CD8-positive, alpha-beta T cell (primary cell): ENCODE measurements at regions of chr21 and their contacts with region 1.

Region 1: DNA sequence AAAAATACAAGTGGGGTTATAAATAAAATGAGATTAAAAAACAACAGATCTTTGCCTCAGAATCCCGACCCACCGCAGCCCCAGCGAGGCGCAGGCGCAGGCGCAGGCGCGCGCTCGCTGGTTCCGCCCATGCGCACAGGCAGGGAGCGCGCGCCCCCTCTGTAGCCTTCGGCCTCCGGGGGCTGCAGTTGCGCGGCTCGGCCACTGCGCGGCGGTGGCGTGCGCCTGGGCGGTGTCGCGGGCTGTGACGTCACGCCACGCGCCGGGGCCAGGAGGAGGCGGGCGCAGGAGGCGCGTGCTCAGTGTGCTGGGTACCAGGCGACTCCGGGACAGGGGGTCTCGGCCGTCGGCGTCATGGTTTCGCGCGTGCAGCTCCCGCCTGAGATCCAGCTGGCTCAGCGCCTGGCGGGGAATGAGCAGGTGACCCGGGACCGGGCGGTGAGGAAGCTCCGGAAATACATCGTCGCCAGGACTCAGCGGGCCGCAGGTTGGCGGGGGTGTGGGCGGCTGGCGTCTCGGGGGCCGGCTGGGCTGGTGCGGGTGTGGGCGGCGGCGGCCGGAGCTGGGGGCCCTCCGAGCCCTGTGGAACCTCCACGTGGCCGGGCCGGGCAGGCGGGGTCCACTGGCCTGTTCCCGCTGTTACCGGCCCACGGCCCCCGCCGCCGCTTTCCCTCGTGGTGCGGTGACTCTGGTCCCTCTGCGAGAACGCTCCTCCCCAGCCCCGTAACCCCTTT is at the start of gene RRP1:
- DNase-seq: peak; percentile 89 to 99 (median 95)
- ATAC-seq: peak; percentile 98
- H3K4me3 ChIP-seq: peak within 1 kb of the TSS; percentile 82 to 94
- H3K4me3 Mint-ChIP-seq: peak within 1 kb of the TSS; percentile 91
- H3K27ac ChIP-seq: peak within 1 kb of the TSS; percentile 71 to 78
- H3K27ac Mint-ChIP-seq: peak within 1 kb of the TSS; percentile 87
- H3K4me1 ChIP-seq: peaks cover 16% of the 10 kb centered on the region
- H3K4me1 Mint-ChIP-seq: peaks cover 21% of the 10 kb centered on the region
- H3K27me3 ChIP-seq: no peaks in the 10 kb centered on the region
- H3K27me3 Mint-ChIP-seq: no peaks in the 10 kb centered on the region
- CTCF ChIP-seq: peak; percentile 97
- total RNA-seq, gene RRP1: 26.8 to 26.9 TPM

Region 2: GRCh38 chr21:42973991-42974831 is 815.2 kb before region 1 on chr21 and contains the start of gene PKNOX1:
- CTCF ChIA-PET with region 1: no interaction called
- POLR2A ChIA-PET with region 1: no interaction called
- intact Hi-C with region 1: loop called (anchors 5 kb)
- DNase-seq: peak; percentile 98 to 100 (median 99)
- ATAC-seq: peak; percentile 85
- H3K4me3 ChIP-seq: peak within 1 kb of the TSS; percentile 83 to 87
- H3K4me3 Mint-ChIP-seq: peak within 1 kb of the TSS; percentile 91
- H3K27ac ChIP-seq: peak within 1 kb of the TSS; percentile 81 to 98
- H3K27ac Mint-ChIP-seq: peak within 1 kb of the TSS; percentile 94
- H3K4me1 ChIP-seq: peaks cover 18% of the 10 kb centered on the region
- H3K4me1 Mint-ChIP-seq: peaks cover 22% of the 10 kb centered on the region
- H3K27me3 ChIP-seq: no peaks in the 10 kb centered on the region
- H3K27me3 Mint-ChIP-seq: no peaks in the 10 kb centered on the region
- CTCF ChIP-seq: no peak
- total RNA-seq, gene PKNOX1: 10.3 to 11.1 TPM

Region 3: DNA sequence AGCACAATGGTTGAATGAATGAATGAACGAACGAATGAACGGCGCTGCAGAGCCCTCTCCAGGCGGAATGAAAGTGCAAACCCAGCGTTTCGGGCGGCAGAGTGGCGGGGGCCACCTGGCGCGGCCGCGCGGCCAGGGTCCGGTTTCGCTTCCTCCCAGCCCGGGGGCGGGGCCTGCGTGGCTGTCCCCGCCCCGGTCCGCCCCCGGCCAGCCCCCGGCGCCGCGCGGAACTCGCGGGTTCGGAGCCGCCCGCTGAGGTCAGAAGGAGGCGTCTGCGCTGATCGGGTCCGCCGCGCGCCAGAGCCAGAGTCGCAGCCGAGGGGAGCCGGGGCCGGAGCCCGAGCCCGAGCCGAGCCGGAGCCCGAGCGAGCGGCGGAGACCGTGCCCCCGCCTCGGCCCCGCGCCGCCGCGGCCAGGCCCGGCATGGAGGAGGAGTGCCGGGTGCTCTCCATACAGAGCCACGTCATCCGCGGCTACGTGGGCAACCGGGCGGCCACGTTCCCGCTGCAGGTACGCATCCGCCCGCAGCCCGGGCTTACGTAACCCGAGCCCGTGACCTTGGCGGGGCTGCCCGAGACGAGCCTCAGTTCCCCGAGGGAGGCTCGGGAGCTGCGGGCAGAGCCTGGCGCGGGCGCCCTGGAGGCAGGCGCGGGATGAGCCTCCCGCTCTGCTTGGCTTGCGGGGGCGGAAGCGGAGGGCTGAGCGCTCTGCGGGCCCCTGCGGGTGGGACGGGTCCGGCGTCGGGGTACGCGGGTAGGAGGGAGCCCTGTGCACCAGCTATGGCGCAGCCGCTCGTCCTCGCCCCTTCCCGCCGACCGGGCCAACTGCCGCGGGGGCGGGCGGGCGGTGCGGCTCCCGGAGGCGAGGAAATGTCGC is 70.3 kb before region 1 on chr21 and contains the start of gene PDXK:
- CTCF ChIA-PET with region 1: no interaction called
- POLR2A ChIA-PET with region 1: no interaction called
- intact Hi-C with region 1: loop called in 1 of 2 experiments (anchors 2 kb)
- DNase-seq: peak; percentile 49 to 91 (median 75)
- ATAC-seq: peak; percentile 77
- H3K4me3 ChIP-seq: peak within 1 kb of the TSS; percentile 70 to 83
- H3K4me3 Mint-ChIP-seq: peak within 1 kb of the TSS; percentile 84
- H3K27ac ChIP-seq: peak within 1 kb of the TSS; percentile 48 to 74
- H3K27ac Mint-ChIP-seq: peak within 1 kb of the TSS; percentile 27
- H3K4me1 ChIP-seq: peaks cover 16% of the 10 kb centered on the region
- H3K4me1 Mint-ChIP-seq: peaks cover 29% of the 10 kb centered on the region
- H3K27me3 ChIP-seq: no peaks in the 10 kb centered on the region
- H3K27me3 Mint-ChIP-seq: no peaks in the 10 kb centered on the region
- CTCF ChIP-seq: no peak
- total RNA-seq, gene PDXK: 60.3 to 71.1 TPM

Region 4: DNA sequence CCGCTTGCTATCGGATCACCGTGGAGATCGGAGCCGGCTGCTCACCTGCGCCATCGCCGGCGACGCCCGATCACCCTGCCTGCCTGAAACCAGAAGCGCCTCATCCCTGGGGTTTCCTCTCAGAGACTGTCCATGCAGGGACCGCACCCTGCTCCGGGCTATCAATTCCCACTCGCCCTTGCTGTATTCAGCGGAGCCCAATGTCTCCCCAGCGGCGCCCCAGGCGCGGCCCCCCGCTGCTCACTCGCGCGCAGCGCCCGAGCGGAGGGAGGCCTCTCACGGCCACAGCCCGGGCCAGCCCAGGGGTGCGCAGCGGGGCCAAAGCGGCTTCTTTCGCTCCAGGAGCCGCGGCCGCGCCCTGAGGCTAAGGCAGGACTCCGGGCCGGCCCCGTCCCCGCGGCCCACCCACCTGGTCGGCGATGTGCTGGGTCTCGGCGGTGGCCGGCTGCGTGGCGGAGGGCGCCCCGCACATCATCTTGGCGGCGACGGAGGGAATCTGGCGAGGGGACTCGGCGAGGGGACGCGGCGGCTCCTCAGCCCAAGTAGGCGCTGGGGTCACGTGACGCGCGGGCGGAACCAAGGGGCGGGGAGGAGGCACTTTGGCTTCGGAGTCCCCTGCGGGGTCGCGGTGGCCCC is 13.5 kb before region 1 on chr21 and contains the start of gene CSTB:
- CTCF ChIA-PET with region 1: interaction called, 8 read pairs
- POLR2A ChIA-PET with region 1: no interaction called
- intact Hi-C with region 1: loop called in 1 of 2 experiments (anchors 1 kb)
- DNase-seq: peak; percentile 65 to 92 (median 83)
- ATAC-seq: peak; percentile 79
- H3K4me3 ChIP-seq: peak within 1 kb of the TSS; percentile 63 to 91
- H3K4me3 Mint-ChIP-seq: peak within 1 kb of the TSS; percentile 91
- H3K27ac ChIP-seq: peak within 1 kb of the TSS; percentile 31 to 70
- H3K27ac Mint-ChIP-seq: peak within 1 kb of the TSS; percentile 83
- H3K4me1 ChIP-seq: peaks cover 19% of the 10 kb centered on the region
- H3K4me1 Mint-ChIP-seq: peaks cover 32% of the 10 kb centered on the region
- H3K27me3 ChIP-seq: no peaks in the 10 kb centered on the region
- H3K27me3 Mint-ChIP-seq: no peaks in the 10 kb centered on the region
- CTCF ChIP-seq: no peak
- total RNA-seq, gene CSTB: 7.4 to 7.7 TPM

Region 5: GRCh38 chr21:43938751-43939442 is 149.5 kb after region 1 on chr21:
- CTCF ChIA-PET with region 1: interaction called, 4 read pairs
- POLR2A ChIA-PET with region 1: interaction called, 3 read pairs
- intact Hi-C with region 1: loop called (anchors 1 kb)
- DNase-seq: peak; percentile 82 to 94 (median 91)
- ATAC-seq: peak; percentile 100
- H3K4me3 ChIP-seq: peak overlapping the region; percentile 57 to 67
- H3K4me3 Mint-ChIP-seq: peak overlapping the region; percentile 91
- H3K27ac ChIP-seq: peak overlapping the region in 1 of 2 experiments; percentile 40
- H3K27ac Mint-ChIP-seq: peak overlapping the region; percentile 85
- H3K4me1 ChIP-seq: peaks cover 14% of the 10 kb centered on the region
- H3K4me1 Mint-ChIP-seq: peaks cover 18% of the 10 kb centered on the region
- H3K27me3 ChIP-seq: no peaks in the 10 kb centered on the region
- H3K27me3 Mint-ChIP-seq: no peaks in the 10 kb centered on the region
- CTCF ChIP-seq: peak; percentile 100